Gastrocnemius medialis (tissue), 4 donors: ENCODE measurements at regions of chr22 and their contacts with region 1.

Region 1: GRCh38 chr22:46116491-46116958 is 33.8 kb upstream of the PPARA start:
- DNase-seq: peak; percentile 87 to 92
- ATAC-seq: peak; percentile 70 to 73
- H3K4me3 ChIP-seq: no peak overlapping the region
- H3K27ac ChIP-seq: peak overlapping the region; percentile 84 to 98 (median 92)
- H3K4me1 ChIP-seq: peaks cover 35 to 44% of the 10 kb centered on the region in 2 donors
- H3K27me3 ChIP-seq: no peaks in the 10 kb centered on the region
- CTCF ChIP-seq: peak; percentile 87 to 99 (median 96)
- POLR2A ChIP-seq: no peak

Region 2: GRCh38 chr22:45994491-45995404 is 121.8 kb before region 1 on chr22:
- in situ Hi-C with region 1: no loop called
- intact Hi-C with region 1: loop called (anchors 1 kb)
- DNase-seq: peak; percentile 65 to 79
- ATAC-seq: peak; percentile 55 to 78
- H3K4me3 ChIP-seq: no peak overlapping the region
- H3K27ac ChIP-seq: peak overlapping the region in 3 of 4 donors; percentile 20 to 83 (median 23)
- H3K4me1 ChIP-seq: peaks cover 39 to 52% of the 10 kb centered on the region in 2 donors
- H3K27me3 ChIP-seq: no peaks in the 10 kb centered on the region
- CTCF ChIP-seq: peak; percentile 94 to 99 (median 98)
- POLR2A ChIP-seq: no peak

Region 3: GRCh38 chr22:46006379-46007002 is 110.0 kb before region 1 on chr22:
- in situ Hi-C with region 1: loop called in 3 of 4 experiments (anchors 5 to 10 kb)
- intact Hi-C with region 1: loop called (anchors 1 kb)
- DNase-seq: peak; percentile 78 to 91
- ATAC-seq: peak; percentile 77 to 78
- H3K4me3 ChIP-seq: peak overlapping the region in 3 of 4 donors; percentile 8 to 29 (median 27)
- H3K27ac ChIP-seq: peak overlapping the region; percentile 84 to 96 (median 92)
- H3K4me1 ChIP-seq: peaks cover 30 to 40% of the 10 kb centered on the region in 2 donors
- H3K27me3 ChIP-seq: no peaks in the 10 kb centered on the region
- CTCF ChIP-seq: peak; percentile 93 to 99 (median 98)
- POLR2A ChIP-seq: no peak

Region 4: GRCh38 chr22:46013460-46014416 is 102.8 kb before region 1 on chr22:
- in situ Hi-C with region 1: loop called (anchors 5 to 10 kb)
- intact Hi-C with region 1: no loop called
- DNase-seq: peak; percentile 81 to 91
- ATAC-seq: peak; percentile 82
- H3K4me3 ChIP-seq: peak overlapping the region; percentile 67 to 79 (median 74)
- H3K27ac ChIP-seq: peak overlapping the region; percentile 90 to 96 (median 94)
- H3K4me1 ChIP-seq: peaks cover 11 to 12% of the 10 kb centered on the region in 2 donors
- H3K27me3 ChIP-seq: no peaks in the 10 kb centered on the region
- CTCF ChIP-seq: peak; percentile 65 to 82 (median 79)
- POLR2A ChIP-seq: peak; percentile 42 to 57

Region 5: DNA sequence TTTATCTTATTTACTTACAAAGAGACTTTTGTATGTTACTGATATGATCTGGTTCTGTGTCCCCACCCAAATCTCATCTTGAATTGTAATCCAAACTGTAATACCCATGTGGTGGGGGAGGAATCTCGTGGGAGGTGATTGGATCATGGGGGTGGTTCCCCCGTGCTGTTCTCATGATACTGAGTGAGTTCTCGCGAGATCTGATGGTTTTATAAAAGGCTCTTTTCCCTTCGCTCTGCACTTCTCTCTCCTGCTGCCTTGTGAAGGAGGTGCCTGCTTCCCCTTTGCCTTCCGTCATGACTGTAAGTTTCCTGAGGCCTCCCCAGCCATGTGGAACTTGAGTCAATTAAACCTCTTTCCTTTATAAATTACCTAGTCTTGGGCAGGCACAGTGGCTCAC is 97.2 kb before region 1 on chr22:
- in situ Hi-C with region 1: loop called in 2 of 4 experiments (anchors 5 to 10 kb)
- intact Hi-C with region 1: no loop called
- DNase-seq: no peak
- ATAC-seq: no peak
- H3K4me3 ChIP-seq: no peak overlapping the region
- H3K27ac ChIP-seq: no peak overlapping the region
- H3K4me1 ChIP-seq: peaks cover 0 to under 1% of the 10 kb centered on the region in 2 donors
- H3K27me3 ChIP-seq: no peaks in the 10 kb centered on the region
- CTCF ChIP-seq: no peak
- POLR2A ChIP-seq: no peak